ENCODE measurements at regions of chr2 and their contacts with region 1.

Region 1: DNA sequence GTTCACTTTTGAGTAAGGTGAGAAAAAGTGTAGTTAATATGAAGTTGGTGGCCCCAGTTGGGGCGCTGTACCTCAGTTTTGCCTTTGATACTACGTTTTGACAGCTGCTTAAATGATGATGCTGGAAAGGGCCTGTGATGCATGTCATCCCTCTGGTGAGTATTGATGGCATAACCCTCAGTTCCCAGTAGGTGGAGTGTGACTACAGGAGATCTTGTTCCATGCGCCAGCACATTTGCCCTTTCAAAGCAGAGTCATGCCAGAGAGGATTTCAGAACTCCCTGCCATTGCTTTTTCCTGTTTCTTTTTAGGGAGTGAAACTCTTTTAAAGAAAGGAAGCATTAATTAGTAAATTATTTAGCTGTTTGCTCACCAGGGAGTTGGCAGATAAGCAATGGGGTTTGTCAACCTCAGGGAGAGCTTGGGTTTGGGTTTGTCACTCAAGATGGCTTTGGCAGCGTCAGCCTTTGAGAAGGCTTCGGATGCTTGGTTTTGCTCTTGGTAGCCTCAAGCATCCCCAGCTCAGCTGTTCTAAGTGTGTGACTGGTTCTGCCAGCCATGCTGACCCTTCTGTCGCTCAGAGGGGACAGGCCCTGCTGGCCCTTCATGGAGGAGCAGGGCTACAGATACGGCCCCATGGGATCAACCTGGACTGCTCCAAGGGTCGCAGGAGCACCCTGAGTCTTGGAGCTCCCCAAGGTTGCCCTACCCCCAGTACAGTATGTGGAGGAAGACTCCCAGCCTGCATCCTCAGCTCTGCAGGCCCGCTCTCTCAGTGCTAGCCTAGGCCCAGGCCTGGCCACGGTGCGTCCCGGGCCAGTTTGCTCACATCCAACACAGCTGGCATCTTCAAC is 29.1 kb downstream of the ARMC9 start:
- DNase-seq: peak; percentile 83
- CTCF ChIP-seq: peak; percentile 74

Region 2: GRCh38 chr2:231104115-231104713 is 123.3 kb before region 1 on chr2:
- CTCF ChIA-PET with region 1: interaction called, 25 read pairs
- POLR2A ChIA-PET with region 1: interaction called, 3 read pairs
- DNase-seq: peak; percentile 56
- CTCF ChIP-seq: peak; percentile 88

Region 3: GRCh38 chr2:231238689-231239088 is 11.2 kb after region 1 on chr2:
- CTCF ChIA-PET with region 1: interaction called, 13 read pairs
- POLR2A ChIA-PET with region 1: interaction called, 7 read pairs
- DNase-seq: no peak
- CTCF ChIP-seq: no peak

Region 4: GRCh38 chr2:231394211-231395141 is 166.9 kb after region 1 on chr2:
- CTCF ChIA-PET with region 1: interaction called, 40 read pairs
- POLR2A ChIA-PET with region 1: no interaction called
- DNase-seq: peak; percentile 82
- CTCF ChIP-seq: peak; percentile 61

Region 5: GRCh38 chr2:231411831-231412617 is 184.5 kb after region 1 on chr2:
- CTCF ChIA-PET with region 1: interaction called, 152 read pairs
- POLR2A ChIA-PET with region 1: no interaction called
- DNase-seq: peak; percentile 89
- CTCF ChIP-seq: peak; percentile 97

Measured in GM10248 (cell line).